ENCODE measurements at regions of chr4 and their contacts with region 1.

Region 1: DNA sequence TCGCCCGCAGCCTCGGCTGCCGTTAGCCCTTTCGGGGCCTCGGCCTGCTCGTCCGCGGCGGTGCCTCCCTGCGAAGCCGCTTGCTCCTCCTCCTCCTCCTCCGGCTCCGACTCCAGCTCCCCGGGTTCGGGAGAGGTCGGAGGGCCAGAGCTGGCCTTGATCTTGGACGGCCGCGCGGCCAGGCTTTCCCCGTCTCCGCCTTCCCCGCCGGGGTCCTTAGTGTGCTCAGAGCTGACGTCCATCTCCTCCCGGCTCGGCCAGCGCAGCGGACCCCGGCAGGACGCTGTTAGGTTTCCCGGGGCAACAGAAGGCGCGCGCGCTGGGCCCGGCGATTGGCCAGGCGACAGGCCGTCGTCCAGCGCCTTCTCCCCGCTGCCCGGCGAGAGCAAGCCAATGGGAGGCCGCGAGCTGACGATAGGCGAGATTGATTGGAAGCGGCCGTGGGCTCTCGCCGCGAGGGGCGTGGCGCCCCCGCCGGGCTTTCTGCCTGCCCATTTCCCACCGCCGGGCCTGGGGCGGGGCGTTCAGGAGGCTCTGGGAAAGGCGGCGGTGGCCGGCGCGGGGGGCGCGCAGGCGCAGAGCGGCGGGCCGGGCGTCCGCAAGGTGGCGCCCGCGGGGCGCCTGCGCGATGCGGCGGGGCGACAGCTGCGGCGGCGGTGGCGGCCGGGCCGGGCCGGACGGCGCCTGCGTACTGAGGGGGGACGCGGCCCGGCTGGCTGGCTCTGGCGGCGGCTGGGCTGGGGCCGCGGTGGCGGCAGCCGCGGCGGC is at the start of gene TADA2B:
- DNase-seq: peak; percentile 96
- H3K4me3 Mint-ChIP-seq: peak within 1 kb of the TSS; percentile 94
- H3K27ac Mint-ChIP-seq: peak within 1 kb of the TSS; percentile 78
- H3K4me1 Mint-ChIP-seq: peaks cover 50% of the 10 kb centered on the region
- H3K27me3 Mint-ChIP-seq: peaks cover 10% of the 10 kb centered on the region
- total RNA-seq, gene TADA2B: 26.6 to 27.3 TPM

Region 2: GRCh38 chr4:6859543-6859942 is 183.3 kb before region 1 on chr4:
- CTCF ChIA-PET with region 1: no interaction called
- POLR2A ChIA-PET with region 1: no interaction called
- DNase-seq: no peak
- H3K4me3 Mint-ChIP-seq: no peak overlapping the region
- H3K27ac Mint-ChIP-seq: no peak overlapping the region
- H3K4me1 Mint-ChIP-seq: peaks cover 28% of the 10 kb centered on the region
- H3K27me3 Mint-ChIP-seq: no peaks in the 10 kb centered on the region

Region 3: DNA sequence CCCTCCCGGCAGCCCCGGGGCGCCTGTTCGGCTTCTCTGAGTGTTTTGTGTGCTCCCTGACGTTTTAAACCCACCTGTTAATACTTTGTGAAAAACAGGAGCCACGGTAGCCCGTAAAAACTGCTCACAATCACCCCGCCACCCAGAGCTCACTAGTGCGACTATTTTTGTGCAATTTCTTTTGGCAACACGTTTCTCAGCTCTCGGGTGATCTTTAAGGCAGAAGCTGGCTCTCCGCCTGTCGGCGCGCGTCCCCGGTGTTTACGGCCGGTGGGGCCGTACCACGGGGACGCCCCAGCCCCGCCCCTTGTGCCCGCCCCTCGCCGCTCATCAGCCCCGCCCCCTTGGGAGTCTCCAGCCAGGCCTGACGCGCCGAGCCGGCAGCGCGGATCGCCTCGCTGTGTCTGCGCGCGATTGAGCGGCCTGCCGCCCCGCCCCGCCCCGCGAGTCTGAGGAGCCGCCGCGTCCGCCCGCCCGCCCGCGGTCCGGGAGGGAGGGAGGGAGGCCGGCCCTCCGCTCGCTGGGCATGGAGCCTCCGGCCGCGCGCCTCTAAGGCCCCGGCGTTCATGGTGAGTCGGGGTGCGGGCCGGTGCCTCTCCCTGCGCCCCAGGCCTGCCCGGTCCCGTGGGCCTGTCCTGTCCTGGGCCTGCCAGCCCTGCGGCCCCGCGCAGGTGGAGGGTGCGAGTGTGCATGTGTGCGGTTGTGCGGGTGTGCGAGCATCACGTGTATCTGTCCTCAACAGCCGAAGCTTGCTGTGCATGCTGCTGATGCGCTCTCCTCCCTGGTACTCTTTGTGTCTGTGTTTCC is 55.9 kb before region 1 on chr4:
- CTCF ChIA-PET with region 1: interaction called, 18 read pairs
- POLR2A ChIA-PET with region 1: interaction called, 29 read pairs
- DNase-seq: peak; percentile 95
- H3K4me3 Mint-ChIP-seq: peak overlapping the region; percentile 98
- H3K27ac Mint-ChIP-seq: peak overlapping the region; percentile 95
- H3K4me1 Mint-ChIP-seq: peaks cover 81% of the 10 kb centered on the region
- H3K27me3 Mint-ChIP-seq: no peaks in the 10 kb centered on the region

Region 4: GRCh38 chr4:7052923-7053715 is 10.2 kb after region 1 on chr4:
- CTCF ChIA-PET with region 1: interaction called, 7 read pairs
- POLR2A ChIA-PET with region 1: interaction called, 18 read pairs
- DNase-seq: no peak
- H3K4me3 Mint-ChIP-seq: no peak overlapping the region
- H3K27ac Mint-ChIP-seq: peak overlapping the region; percentile 44
- H3K4me1 Mint-ChIP-seq: peaks cover 36% of the 10 kb centered on the region
- H3K27me3 Mint-ChIP-seq: no peaks in the 10 kb centered on the region

Region 5: GRCh38 chr4:7167706-7168105 is 124.8 kb after region 1 on chr4:
- CTCF ChIA-PET with region 1: no interaction called
- POLR2A ChIA-PET with region 1: no interaction called
- DNase-seq: no peak
- H3K4me3 Mint-ChIP-seq: no peak overlapping the region
- H3K27ac Mint-ChIP-seq: no peak overlapping the region
- H3K4me1 Mint-ChIP-seq: peaks cover 10% of the 10 kb centered on the region
- H3K27me3 Mint-ChIP-seq: peaks cover 12% of the 10 kb centered on the region

Measured in activated CD4-positive, alpha-beta memory T cell treated with anti-CD3 and anti-CD28 coated beads, Interleukin-2, amount 10 ng/mL, durations not matched to agents 7 days and 5 days (primary cell).